ENCODE measurements at regions of chr5 and their contacts with region 1.

Region 1: DNA sequence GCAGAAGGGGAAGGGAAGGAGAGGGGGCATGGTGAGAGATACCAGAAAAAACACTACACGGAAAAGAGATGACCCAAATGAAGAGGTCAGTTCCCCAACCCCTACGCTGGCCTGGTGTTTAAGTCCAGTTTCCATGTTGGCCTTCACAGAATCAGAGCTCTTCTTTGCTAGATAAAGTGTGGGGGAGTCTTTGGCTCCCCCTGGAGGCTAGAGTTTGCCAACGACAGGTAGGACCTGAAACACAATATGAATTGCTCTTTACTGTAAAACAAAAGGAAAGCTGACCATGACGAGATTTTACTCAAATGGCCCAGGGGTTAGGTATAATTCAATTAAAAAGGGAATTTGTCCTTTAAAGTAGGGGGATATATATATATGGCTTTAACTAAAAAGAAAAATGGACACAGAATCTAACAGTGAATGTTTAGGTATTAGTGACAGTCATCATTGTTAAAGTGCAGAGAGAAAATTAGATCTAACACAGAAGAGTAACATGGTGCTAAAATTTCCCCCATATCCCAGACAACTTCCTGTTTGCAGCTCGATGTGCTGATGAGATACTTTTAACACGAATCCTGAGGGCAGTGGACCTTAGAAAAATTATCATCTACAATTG is 92.0 kb downstream of the SV2C start:
- H3K4me3 ChIP-seq: no peak overlapping the region
- H3K27ac ChIP-seq: no peak overlapping the region
- H3K4me1 ChIP-seq: no peaks in the 10 kb centered on the region
- CTCF ChIP-seq: 0 out of 2 replicates have a peak, but pooled peaks have one; percentile 20

Region 2: GRCh38 chr5:75734913-75735789 is 440.0 kb before region 1 on chr5:
- CTCF ChIA-PET with region 1: interaction called, 16 read pairs
- POLR2A ChIA-PET with region 1: no interaction called
- H3K4me3 ChIP-seq: no peak overlapping the region
- H3K27ac ChIP-seq: no peak overlapping the region
- H3K4me1 ChIP-seq: no peaks in the 10 kb centered on the region
- CTCF ChIP-seq: no peak

Region 3: GRCh38 chr5:76074487-76075065 is 100.6 kb before region 1 on chr5:
- CTCF ChIA-PET with region 1: interaction called, 10 read pairs
- POLR2A ChIA-PET with region 1: no interaction called
- H3K4me3 ChIP-seq: no peak overlapping the region
- H3K27ac ChIP-seq: no peak overlapping the region
- H3K4me1 ChIP-seq: no peaks in the 10 kb centered on the region
- CTCF ChIP-seq: no peak

Region 4: GRCh38 chr5:76145945-76146344 is 29.2 kb before region 1 on chr5:
- CTCF ChIA-PET with region 1: interaction called, 26 read pairs
- POLR2A ChIA-PET with region 1: no interaction called
- H3K4me3 ChIP-seq: no peak overlapping the region
- H3K27ac ChIP-seq: no peak overlapping the region
- H3K4me1 ChIP-seq: no peaks in the 10 kb centered on the region
- CTCF ChIP-seq: no peak

Region 5: DNA sequence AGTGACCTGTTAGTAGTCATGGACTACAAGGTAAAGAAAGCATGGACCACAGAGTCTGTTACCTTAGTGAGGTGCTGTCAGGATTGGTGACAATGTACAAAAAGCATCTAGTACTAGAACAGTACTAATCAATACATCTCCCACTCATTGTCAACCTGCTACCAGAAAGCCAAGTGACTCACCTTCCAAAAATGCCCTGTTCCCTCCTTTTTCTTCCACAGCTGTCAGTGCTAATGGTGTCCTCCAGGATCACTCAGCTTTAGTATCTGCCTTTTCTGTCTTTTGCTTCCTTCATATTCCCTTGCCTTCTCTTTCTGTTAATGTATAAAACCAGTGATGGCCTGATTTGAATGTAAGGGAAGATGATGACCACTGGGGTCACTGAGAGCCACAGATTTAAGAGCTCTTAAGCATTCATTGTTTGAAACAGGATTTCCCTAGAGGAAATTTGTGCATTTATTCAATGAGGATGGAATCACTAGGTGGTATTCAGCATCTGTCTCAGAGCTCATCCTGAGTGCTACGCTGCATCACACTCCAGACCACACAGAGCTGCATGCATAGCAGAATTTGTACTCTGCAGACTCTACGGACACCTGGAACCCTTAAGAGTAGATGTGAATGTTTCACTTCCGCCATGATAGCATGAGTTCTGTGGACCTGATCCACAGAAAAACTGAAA is 21.0 kb before region 1 on chr5:
- CTCF ChIA-PET with region 1: interaction called, 14 read pairs
- POLR2A ChIA-PET with region 1: no interaction called
- H3K4me3 ChIP-seq: no peak overlapping the region
- H3K27ac ChIP-seq: no peak overlapping the region
- H3K4me1 ChIP-seq: no peaks in the 10 kb centered on the region
- CTCF ChIP-seq: no peak

Measured in HEK293 (cell line).